Activated CD4-positive, alpha-beta T cell treated with anti-CD3 and anti-CD28 coated beads for 36 hours (primary cell): ENCODE measurements at regions of chr17 and their contacts with region 1.

Region 1: DNA sequence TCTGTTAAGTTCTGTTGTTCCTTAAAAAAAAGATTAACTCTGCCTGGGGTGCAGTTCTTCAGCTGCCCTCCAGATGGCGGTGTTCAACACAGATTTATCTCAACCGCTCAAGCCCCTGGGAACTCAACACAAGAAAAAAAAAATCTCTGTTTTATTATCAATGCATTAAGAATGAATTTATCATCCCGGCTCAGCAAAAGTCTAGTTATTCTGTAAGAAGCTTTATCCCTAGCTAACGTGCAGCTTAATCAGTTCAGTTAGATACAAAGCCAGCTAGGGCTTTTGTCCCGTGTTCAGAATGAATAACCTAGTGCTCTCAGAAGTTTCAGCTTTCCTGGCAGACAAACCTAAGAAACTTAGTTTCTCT is 475.9 kb upstream of the CCL2 start:
- DNase-seq: peak; percentile 59
- ATAC-seq: no peak
- H3K4me3 Mint-ChIP-seq: no peak overlapping the region
- H3K27ac Mint-ChIP-seq: no peak overlapping the region
- H3K4me1 Mint-ChIP-seq: no peaks in the 10 kb centered on the region
- H3K27me3 Mint-ChIP-seq: peaks cover 22% of the 10 kb centered on the region

Region 2: DNA sequence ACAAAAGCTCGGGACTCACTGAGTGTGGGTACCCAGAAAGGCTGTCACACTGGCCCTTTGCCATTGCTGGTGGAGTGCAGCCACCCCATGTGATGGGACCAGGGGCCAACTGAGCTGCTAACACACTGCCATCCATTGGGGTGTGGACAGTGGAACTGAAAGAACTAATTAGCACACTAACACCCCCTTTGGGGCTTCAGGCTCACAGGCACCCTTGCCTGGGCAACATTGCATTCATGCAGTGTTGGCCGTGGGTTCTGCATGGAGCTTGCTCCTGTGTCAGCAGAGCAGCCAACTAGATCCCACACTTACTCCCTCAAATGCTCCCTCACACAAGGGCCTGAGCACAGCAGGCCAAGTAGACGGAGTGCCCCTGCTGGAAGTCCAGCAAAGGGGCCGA is 10.1 kb before region 1 on chr17:
- CTCF ChIA-PET with region 1: interaction called, 14 read pairs
- POLR2A ChIA-PET with region 1: no interaction called
- intact Hi-C with region 1: no loop called
- DNase-seq: no peak
- ATAC-seq: no peak
- H3K4me3 Mint-ChIP-seq: no peak overlapping the region
- H3K27ac Mint-ChIP-seq: no peak overlapping the region
- H3K4me1 Mint-ChIP-seq: no peaks in the 10 kb centered on the region
- H3K27me3 Mint-ChIP-seq: peaks cover 9% of the 10 kb centered on the region

Region 3: DNA sequence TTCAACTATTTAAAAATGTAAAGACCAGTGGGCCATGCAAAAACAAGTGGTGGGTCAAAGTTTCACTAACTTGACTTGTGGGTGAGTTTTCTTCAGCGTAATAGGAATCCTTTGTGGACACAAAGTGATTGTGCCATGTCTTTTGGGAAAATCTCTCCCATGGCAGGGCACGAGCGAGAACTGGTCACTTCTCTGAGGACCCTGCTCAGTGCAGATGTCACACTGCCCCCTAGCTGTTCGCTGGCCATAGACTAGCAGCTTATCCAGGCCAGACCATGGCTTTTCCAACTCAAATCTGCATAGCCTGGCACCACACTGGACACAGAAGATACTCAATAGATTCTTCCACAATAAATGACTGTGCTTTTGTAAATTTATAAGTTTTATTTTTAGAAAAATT is 169.9 kb after region 1 on chr17:
- CTCF ChIA-PET with region 1: no interaction called
- POLR2A ChIA-PET with region 1: no interaction called
- intact Hi-C with region 1: loop called in 1 of 2 experiments (anchors 5 kb)
- DNase-seq: peak; percentile 29
- ATAC-seq: no peak
- H3K4me3 Mint-ChIP-seq: no peak overlapping the region
- H3K27ac Mint-ChIP-seq: no peak overlapping the region
- H3K4me1 Mint-ChIP-seq: no peaks in the 10 kb centered on the region
- H3K27me3 Mint-ChIP-seq: peaks cover 2% of the 10 kb centered on the region